ENCODE measurements at regions of chr15 and their contacts with region 1.

Region 1: GRCh38 chr15:78979456-78980320 is 34.8 kb upstream of the CTSH start:
- DNase-seq: peak; percentile 91
- H3K4me3 Mint-ChIP-seq: no peak overlapping the region
- H3K27ac Mint-ChIP-seq: no peak overlapping the region
- H3K4me1 Mint-ChIP-seq: peaks cover 7% of the 10 kb centered on the region
- H3K27me3 Mint-ChIP-seq: no peaks in the 10 kb centered on the region
- CTCF ChIP-seq: peak; percentile 67

Region 2: GRCh38 chr15:78909791-78910228 is 69.9 kb before region 1 on chr15:
- CTCF ChIA-PET with region 1: interaction called, 40 read pairs
- POLR2A ChIA-PET with region 1: no interaction called
- intact Hi-C with region 1: loop called (anchors 5 kb)
- DNase-seq: peak; percentile 66
- H3K4me3 Mint-ChIP-seq: no peak overlapping the region
- H3K27ac Mint-ChIP-seq: no peak overlapping the region
- H3K4me1 Mint-ChIP-seq: peaks cover 9% of the 10 kb centered on the region
- H3K27me3 Mint-ChIP-seq: no peaks in the 10 kb centered on the region
- CTCF ChIP-seq: peak; percentile 48

Region 3: GRCh38 chr15:78930556-78931401 is 48.9 kb before region 1 on chr15:
- CTCF ChIA-PET with region 1: interaction called, 6 read pairs
- POLR2A ChIA-PET with region 1: interaction called, 6 read pairs
- intact Hi-C with region 1: loop called (anchors 5 kb)
- DNase-seq: peak; percentile 97
- H3K4me3 Mint-ChIP-seq: no peak overlapping the region
- H3K27ac Mint-ChIP-seq: peak overlapping the region; percentile 73
- H3K4me1 Mint-ChIP-seq: peaks cover 17% of the 10 kb centered on the region
- H3K27me3 Mint-ChIP-seq: no peaks in the 10 kb centered on the region
- CTCF ChIP-seq: no peak

Region 4: DNA sequence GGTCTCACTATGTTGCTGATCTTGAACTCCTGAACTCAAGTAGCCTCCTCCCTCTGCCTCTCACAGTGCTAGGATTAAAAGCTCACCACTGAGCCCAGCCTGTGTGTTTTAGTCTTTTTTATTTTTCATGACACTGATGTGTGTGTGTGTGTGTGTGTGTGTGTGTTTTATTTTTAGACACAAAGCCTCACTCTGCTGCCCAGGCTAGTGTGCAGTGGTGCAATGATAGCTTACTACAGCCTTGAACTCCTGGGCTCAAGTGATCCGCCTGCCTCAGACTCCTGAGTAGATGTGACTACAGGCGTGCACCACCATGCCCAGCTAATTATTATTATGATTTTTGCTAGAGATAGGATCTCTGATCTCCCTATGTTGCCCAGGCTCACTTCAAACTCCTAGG is 11.6 kb before region 1 on chr15:
- CTCF ChIA-PET with region 1: interaction called, 12 read pairs
- POLR2A ChIA-PET with region 1: no interaction called
- intact Hi-C with region 1: no loop called
- DNase-seq: no peak
- H3K4me3 Mint-ChIP-seq: no peak overlapping the region
- H3K27ac Mint-ChIP-seq: no peak overlapping the region
- H3K4me1 Mint-ChIP-seq: no peaks in the 10 kb centered on the region
- H3K27me3 Mint-ChIP-seq: no peaks in the 10 kb centered on the region
- CTCF ChIP-seq: no peak

Region 5: GRCh38 chr15:79130535-79131130 is 150.9 kb after region 1 on chr15:
- CTCF ChIA-PET with region 1: no interaction called
- POLR2A ChIA-PET with region 1: no interaction called
- intact Hi-C with region 1: no loop called
- DNase-seq: peak; percentile 12
- H3K4me3 Mint-ChIP-seq: no peak overlapping the region
- H3K27ac Mint-ChIP-seq: no peak overlapping the region
- H3K4me1 Mint-ChIP-seq: no peaks in the 10 kb centered on the region
- H3K27me3 Mint-ChIP-seq: peaks cover 41% of the 10 kb centered on the region
- CTCF ChIP-seq: no peak

Region 6: GRCh38 chr15:80010131-80010673 is 1030.5 kb after region 1 on chr15:
- CTCF ChIA-PET with region 1: no interaction called
- POLR2A ChIA-PET with region 1: no interaction called
- intact Hi-C with region 1: no loop called
- DNase-seq: peak; percentile 92
- H3K4me3 Mint-ChIP-seq: no peak overlapping the region
- H3K27ac Mint-ChIP-seq: peak overlapping the region; percentile 75
- H3K4me1 Mint-ChIP-seq: peaks cover 11% of the 10 kb centered on the region
- H3K27me3 Mint-ChIP-seq: no peaks in the 10 kb centered on the region
- CTCF ChIP-seq: no peak

Measured in MCF 10A (cell line).